Calu3 (cell line): ENCODE measurements at regions of chr15 and their contacts with region 1.

Region 1: DNA sequence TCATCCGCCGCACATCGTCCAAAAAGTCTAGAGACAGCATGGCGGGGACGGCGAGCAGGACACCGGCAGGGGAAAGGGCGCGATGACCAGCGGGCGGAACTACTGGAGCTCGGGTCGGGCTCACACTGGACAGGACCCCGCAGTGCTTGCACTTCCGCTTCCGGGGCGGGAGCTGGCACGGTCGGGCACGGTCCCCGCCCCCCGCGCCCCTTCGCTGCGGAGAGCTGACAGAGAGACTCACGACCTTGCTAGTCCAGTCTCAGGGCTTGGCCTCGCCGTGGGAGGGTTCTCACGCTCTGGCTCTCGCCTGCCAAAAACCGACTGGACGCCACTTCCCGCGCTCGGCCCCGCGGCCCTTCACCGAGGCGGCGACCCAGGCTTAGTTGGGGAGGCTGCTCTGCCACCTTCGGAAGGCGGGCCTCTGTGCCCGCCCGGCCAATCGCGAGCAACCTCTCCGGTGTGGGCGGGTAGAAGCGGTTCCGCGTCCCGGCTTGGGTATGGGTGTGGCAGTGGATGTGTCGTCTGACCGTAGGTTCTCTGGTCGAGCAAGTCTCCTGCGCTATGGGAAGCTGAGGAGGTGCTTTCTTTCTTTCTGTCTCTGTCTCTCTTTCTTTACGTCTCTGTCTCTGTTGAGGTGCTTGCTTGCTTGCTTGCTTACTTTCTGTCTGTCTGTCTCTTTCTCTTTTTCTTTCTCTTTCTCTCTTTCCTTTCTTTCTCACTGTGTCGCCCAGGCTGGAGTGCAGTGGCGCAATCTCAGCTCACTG is at the start of gene SEC11A:
- DNase-seq: peak; percentile 99
- H3K4me3 Mint-ChIP-seq: peak within 1 kb of the TSS; percentile 95
- H3K27ac Mint-ChIP-seq: peak within 1 kb of the TSS; percentile 98
- H3K4me1 Mint-ChIP-seq: peaks cover 35% of the 10 kb centered on the region
- H3K27me3 Mint-ChIP-seq: no peaks in the 10 kb centered on the region
- CTCF ChIP-seq: no peak
- total RNA-seq, gene SEC11A: 214 and 243 TPM in 2 replicates

Region 2: GRCh38 chr15:84658080-84658787 is 58.0 kb before region 1 on chr15 and contains the start of gene NMB:
- CTCF ChIA-PET with region 1: interaction called, 4 read pairs
- intact Hi-C with region 1: loop called (anchors 5 kb)
- DNase-seq: peak; percentile 95
- H3K4me3 Mint-ChIP-seq: peak within 1 kb of the TSS; percentile 74
- H3K27ac Mint-ChIP-seq: peak within 1 kb of the TSS; percentile 71
- H3K4me1 Mint-ChIP-seq: peaks cover 32% of the 10 kb centered on the region
- H3K27me3 Mint-ChIP-seq: no peaks in the 10 kb centered on the region
- CTCF ChIP-seq: peak; percentile 87
- total RNA-seq, gene NMB: 10.9 and 16.6 TPM in 2 replicates

Region 3: GRCh38 chr15:84734794-84735479 is 18.7 kb after region 1 on chr15:
- CTCF ChIA-PET with region 1: interaction called, 45 read pairs
- intact Hi-C with region 1: loop called (anchors 2 kb)
- DNase-seq: peak; percentile 94
- H3K4me3 Mint-ChIP-seq: peak overlapping the region; percentile 45
- H3K27ac Mint-ChIP-seq: peak overlapping the region; percentile 96
- H3K4me1 Mint-ChIP-seq: peaks cover 39% of the 10 kb centered on the region
- H3K27me3 Mint-ChIP-seq: no peaks in the 10 kb centered on the region
- CTCF ChIP-seq: no peak

Region 4: DNA sequence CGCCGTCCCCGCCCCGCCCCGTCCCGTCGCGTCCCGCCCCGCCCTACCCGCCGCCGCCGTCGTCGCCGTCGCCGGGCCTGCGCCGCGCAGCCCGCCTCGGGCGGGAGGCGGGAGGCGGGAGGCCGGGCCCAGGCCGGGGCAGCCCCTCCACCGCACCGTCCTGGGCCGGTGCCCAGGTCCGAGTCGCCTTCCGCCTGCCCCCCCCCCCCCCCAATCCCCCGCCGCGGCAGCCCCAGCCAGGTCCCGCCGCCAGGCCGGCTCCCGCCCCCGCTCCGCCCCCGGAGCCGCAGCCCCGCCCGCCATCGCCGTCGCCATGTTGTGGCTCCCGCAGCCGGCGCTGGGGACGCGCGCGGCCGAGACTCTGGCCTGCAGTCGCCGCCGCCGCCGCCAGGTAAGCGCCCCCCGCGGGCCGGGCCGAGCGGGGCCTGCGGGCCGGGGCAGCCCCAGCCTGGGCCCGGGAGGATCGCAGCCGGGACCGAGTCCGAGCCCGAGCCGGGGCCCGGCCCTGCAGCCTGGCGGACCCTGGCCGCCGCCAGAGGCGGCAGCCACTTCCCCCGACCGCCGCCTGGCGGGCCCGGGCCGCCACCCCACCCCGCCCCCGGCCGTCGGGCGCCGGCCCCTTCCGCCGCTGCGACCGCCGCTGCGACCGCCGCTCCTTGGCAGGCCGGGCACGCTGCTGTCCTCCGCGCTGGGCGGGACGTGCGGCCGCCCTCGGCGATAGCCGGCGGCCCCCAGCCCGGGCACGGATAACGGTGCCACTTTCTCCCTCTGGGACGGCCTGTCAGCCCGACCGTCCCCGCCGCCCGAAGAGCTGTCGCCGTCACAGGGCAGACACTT is 32.3 kb after region 1 on chr15 and contains the start of gene ZNF592:
- CTCF ChIA-PET with region 1: interaction called, 4 read pairs
- intact Hi-C with region 1: loop called (anchors 1 kb)
- DNase-seq: peak; percentile 93
- H3K4me3 Mint-ChIP-seq: peak within 1 kb of the TSS; percentile 94
- H3K27ac Mint-ChIP-seq: peak within 1 kb of the TSS; percentile 84
- H3K4me1 Mint-ChIP-seq: peaks cover 48% of the 10 kb centered on the region
- H3K27me3 Mint-ChIP-seq: no peaks in the 10 kb centered on the region
- CTCF ChIP-seq: peak; percentile 26
- total RNA-seq, gene ZNF592: 49.5 and 49.6 TPM in 2 replicates

Region 5: GRCh38 chr15:84810073-84810840 is 94.0 kb after region 1 on chr15:
- CTCF ChIA-PET with region 1: no interaction called
- intact Hi-C with region 1: no loop called
- DNase-seq: no peak
- H3K4me3 Mint-ChIP-seq: no peak overlapping the region
- H3K27ac Mint-ChIP-seq: no peak overlapping the region
- H3K4me1 Mint-ChIP-seq: no peaks in the 10 kb centered on the region
- H3K27me3 Mint-ChIP-seq: no peaks in the 10 kb centered on the region
- CTCF ChIP-seq: no peak

Region 6: GRCh38 chr15:84834969-84835368 is 118.8 kb after region 1 on chr15:
- CTCF ChIA-PET with region 1: no interaction called
- intact Hi-C with region 1: no loop called
- DNase-seq: no peak
- H3K4me3 Mint-ChIP-seq: no peak overlapping the region
- H3K27ac Mint-ChIP-seq: no peak overlapping the region
- H3K4me1 Mint-ChIP-seq: peaks cover 23% of the 10 kb centered on the region
- H3K27me3 Mint-ChIP-seq: peaks cover 24% of the 10 kb centered on the region
- CTCF ChIP-seq: no peak